ENCODE measurements at regions of chr10 and their contacts with region 1.

Region 1: DNA sequence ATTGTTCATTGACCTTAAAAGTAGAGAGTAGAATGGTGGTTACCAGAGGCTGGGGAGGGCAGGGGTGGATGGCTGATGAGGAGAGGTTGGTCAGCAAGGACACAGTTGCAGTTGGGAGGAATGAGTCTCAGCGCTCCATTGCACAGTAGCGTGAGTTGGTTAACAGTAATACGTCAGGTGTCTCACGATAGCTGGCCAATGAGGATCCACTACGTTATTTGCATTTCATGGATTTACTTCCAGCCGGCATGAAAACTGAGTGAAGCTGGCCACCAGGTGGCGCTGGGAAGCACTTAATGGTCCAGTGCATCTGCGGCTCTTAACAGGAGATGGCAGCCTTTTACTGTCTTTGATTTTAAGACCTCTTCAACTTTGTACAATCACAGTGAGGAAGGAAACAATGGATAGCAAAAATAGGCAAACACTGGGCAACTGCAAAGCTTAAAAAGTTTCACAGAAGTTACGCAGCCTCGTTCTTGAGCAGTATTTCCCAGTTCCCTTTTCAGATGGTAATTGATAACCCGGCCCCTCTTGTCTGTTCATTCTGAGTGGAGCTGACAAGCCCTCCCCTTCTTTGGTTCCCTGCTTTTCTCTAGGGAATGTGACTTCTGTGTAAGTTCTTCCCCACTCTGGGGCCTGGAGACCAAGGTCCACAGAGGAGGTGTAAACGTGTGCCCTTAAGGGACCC is 23.7 kb downstream of the AKR1E2 start:
- DNase-seq: peak; percentile 92 to 95 (median 94)
- H3K4me3 ChIP-seq: no peak overlapping the region
- H3K4me3 Mint-ChIP-seq: peak overlapping the region in 1 of 2 donors; percentile 72
- H3K27ac ChIP-seq: peak overlapping the region in 1 of 2 donors; percentile 63
- H3K27ac Mint-ChIP-seq: peak overlapping the region; percentile 66 to 90 (median 87)
- H3K4me1 ChIP-seq: peaks cover 11 to 27% of the 10 kb centered on the region in 2 donors
- H3K4me1 Mint-ChIP-seq: peaks cover 28% of the 10 kb centered on the region
- H3K27me3 ChIP-seq: no peaks in the 10 kb centered on the region
- H3K27me3 Mint-ChIP-seq: peaks cover 0 to 3% (median 0%) of the 10 kb centered on the region in 3 donors
- CTCF ChIP-seq: peak; percentile 99

Region 2: DNA sequence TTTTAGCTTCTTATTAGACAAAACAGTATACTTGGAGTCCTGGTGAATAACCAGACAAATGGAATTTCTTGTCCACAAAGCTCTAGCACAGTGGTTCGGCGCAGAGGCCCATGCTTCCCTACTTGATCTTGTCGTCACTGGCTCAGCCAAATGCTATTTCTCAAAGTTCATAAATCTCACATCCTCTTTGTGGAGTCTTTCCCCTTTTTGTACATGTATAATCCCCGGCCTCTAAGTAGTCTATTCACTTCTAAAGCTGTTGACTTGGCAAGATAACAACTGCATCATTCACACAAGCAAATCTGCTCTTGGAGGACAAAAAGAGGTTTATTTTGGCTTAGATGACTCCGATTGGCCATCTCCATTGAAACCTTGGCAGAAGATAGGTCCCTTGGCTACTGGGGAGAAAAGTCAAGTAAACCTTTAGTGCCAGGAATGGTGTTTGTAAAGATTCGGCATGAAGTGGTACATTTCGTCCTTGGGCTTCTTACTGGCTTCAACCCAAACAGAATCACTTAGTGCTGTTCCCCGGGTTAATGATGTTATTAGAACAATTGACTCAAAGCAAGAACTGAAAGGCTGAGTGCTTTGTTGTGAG is 28.8 kb before region 1 on chr10:
- intact Hi-C with region 1: loop called (anchors 2 kb)
- DNase-seq: peak; percentile 53 to 69 (median 55)
- H3K4me3 ChIP-seq: no peak overlapping the region
- H3K4me3 Mint-ChIP-seq: no peak overlapping the region
- H3K27ac ChIP-seq: peak overlapping the region; percentile 8 to 17
- H3K27ac Mint-ChIP-seq: peak overlapping the region in 5 of 7 donors; percentile 15 to 88 (median 80)
- H3K4me1 ChIP-seq: peaks cover 18 to 19% of the 10 kb centered on the region in 2 donors
- H3K4me1 Mint-ChIP-seq: peaks cover 23% of the 10 kb centered on the region
- H3K27me3 ChIP-seq: no peaks in the 10 kb centered on the region
- H3K27me3 Mint-ChIP-seq: peaks cover 3 to 12% (median 4%) of the 10 kb centered on the region in 3 donors
- CTCF ChIP-seq: no peak

Region 3: GRCh38 chr10:4909118-4909517 is 59.4 kb after region 1 on chr10:
- intact Hi-C with region 1: no loop called
- DNase-seq: no peak
- H3K4me3 ChIP-seq: no peak overlapping the region
- H3K4me3 Mint-ChIP-seq: no peak overlapping the region
- H3K27ac ChIP-seq: no peak overlapping the region
- H3K27ac Mint-ChIP-seq: no peak overlapping the region
- H3K4me1 ChIP-seq: no peaks in the 10 kb centered on the region
- H3K4me1 Mint-ChIP-seq: no peaks in the 10 kb centered on the region
- H3K27me3 ChIP-seq: no peaks in the 10 kb centered on the region
- H3K27me3 Mint-ChIP-seq: peaks cover 0 to 2% (median 0%) of the 10 kb centered on the region in 3 donors
- CTCF ChIP-seq: no peak

Region 4: GRCh38 chr10:5283305-5284158 is 433.8 kb after region 1 on chr10:
- intact Hi-C with region 1: loop called in 1 of 2 experiments (anchors 10 kb)
- DNase-seq: peak; percentile 70 to 82 (median 75)
- H3K4me3 ChIP-seq: peak overlapping the region in 1 of 3 experiments; percentile 38
- H3K4me3 Mint-ChIP-seq: peak overlapping the region; percentile 40 to 82
- H3K27ac ChIP-seq: peak overlapping the region; percentile 69 to 93
- H3K27ac Mint-ChIP-seq: peak overlapping the region; percentile 92 to 99 (median 96)
- H3K4me1 ChIP-seq: peaks cover 28 to 31% of the 10 kb centered on the region in 2 donors
- H3K4me1 Mint-ChIP-seq: peaks cover 32% of the 10 kb centered on the region
- H3K27me3 ChIP-seq: no peaks in the 10 kb centered on the region
- H3K27me3 Mint-ChIP-seq: peaks cover 0 to 4% (median 0%) of the 10 kb centered on the region in 3 donors
- CTCF ChIP-seq: peak; percentile 84

Region 5: GRCh38 chr10:5385224-5385623 is 535.5 kb after region 1 on chr10:
- intact Hi-C with region 1: loop called (anchors 2 to 5 kb)
- DNase-seq: no peak
- H3K4me3 ChIP-seq: no peak overlapping the region
- H3K4me3 Mint-ChIP-seq: no peak overlapping the region
- H3K27ac ChIP-seq: no peak overlapping the region
- H3K27ac Mint-ChIP-seq: no peak overlapping the region
- H3K4me1 ChIP-seq: no peaks in the 10 kb centered on the region
- H3K4me1 Mint-ChIP-seq: no peaks in the 10 kb centered on the region
- H3K27me3 ChIP-seq: no peaks in the 10 kb centered on the region
- H3K27me3 Mint-ChIP-seq: peaks cover 1 to 2% (median 2%) of the 10 kb centered on the region in 3 donors
- CTCF ChIP-seq: no peak

Region 6: DNA sequence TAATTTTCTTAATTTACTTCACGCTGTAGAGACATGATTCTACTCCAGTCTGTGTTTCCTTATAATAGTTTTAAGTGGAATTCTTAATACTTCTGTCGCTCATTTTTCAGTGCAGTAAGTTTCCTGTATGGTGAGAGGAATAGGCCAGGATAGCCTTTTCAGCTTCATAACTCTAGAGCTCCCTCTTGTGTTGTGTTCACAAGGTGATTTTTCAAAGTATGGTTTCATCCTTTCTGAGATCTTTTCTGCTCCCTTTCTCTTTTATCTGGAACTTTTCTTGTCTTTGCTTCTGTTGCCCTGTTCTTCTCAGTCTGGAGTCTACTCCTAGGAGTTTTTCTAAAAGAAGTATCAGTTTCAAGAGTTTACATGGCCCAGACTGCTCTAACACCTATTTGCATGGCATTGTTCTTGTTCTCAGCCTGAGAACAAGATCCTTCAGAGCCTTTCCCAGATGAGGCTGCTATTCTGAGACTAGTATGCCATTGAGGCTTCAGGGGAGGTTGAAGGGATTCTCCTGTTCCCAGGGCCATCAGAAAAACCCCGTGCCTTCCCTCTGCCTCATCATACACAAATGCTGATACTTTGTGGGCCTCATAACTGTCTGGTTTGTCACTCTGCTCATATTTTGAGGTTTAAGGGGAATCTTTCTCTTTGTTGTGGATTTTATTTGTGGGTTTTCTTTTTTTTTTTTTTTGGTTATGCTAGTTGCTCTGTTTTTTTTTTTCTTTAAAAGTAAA is 584.5 kb after region 1 on chr10:
- intact Hi-C with region 1: loop called (anchors 5 kb)
- DNase-seq: peak in 2 of 3 donors; percentile 33 to 48
- H3K4me3 ChIP-seq: no peak overlapping the region
- H3K4me3 Mint-ChIP-seq: no peak overlapping the region
- H3K27ac ChIP-seq: no peak overlapping the region
- H3K27ac Mint-ChIP-seq: peak overlapping the region in 1 of 7 donors; percentile 37
- H3K4me1 ChIP-seq: no peaks in the 10 kb centered on the region
- H3K4me1 Mint-ChIP-seq: peaks cover 3% of the 10 kb centered on the region
- H3K27me3 ChIP-seq: no peaks in the 10 kb centered on the region
- H3K27me3 Mint-ChIP-seq: no peaks in the 10 kb centered on the region
- CTCF ChIP-seq: peak; percentile 76

Region 7: GRCh38 chr10:5623081-5623748 is 773.5 kb after region 1 on chr10:
- intact Hi-C with region 1: loop called (anchors 10 kb)
- DNase-seq: peak; percentile 56 to 69 (median 67)
- H3K4me3 ChIP-seq: no peak overlapping the region
- H3K4me3 Mint-ChIP-seq: no peak overlapping the region
- H3K27ac ChIP-seq: no peak overlapping the region
- H3K27ac Mint-ChIP-seq: no peak overlapping the region
- H3K4me1 ChIP-seq: no peaks in the 10 kb centered on the region
- H3K4me1 Mint-ChIP-seq: peaks cover 3% of the 10 kb centered on the region
- H3K27me3 ChIP-seq: no peaks in the 10 kb centered on the region
- H3K27me3 Mint-ChIP-seq: peaks cover 0 to 3% (median 3%) of the 10 kb centered on the region in 3 donors
- CTCF ChIP-seq: peak; percentile 84